Naive thymus-derived CD4-positive, alpha-beta T cell (primary cell): ENCODE measurements at regions of chr2 and their contacts with region 1.

Region 1: GRCh38 chr2:68467077-68467960 is at the starts of genes APLF and FBXO48:
- DNase-seq: peak; percentile 90 to 99 (median 99)
- ATAC-seq: peak; percentile 94
- H3K4me3 ChIP-seq: peak within 1 kb of the TSS; percentile 99
- H3K4me3 Mint-ChIP-seq: peak within 1 kb of the TSS; percentile 88 to 99 (median 94)
- H3K27ac ChIP-seq: peak within 1 kb of the TSS; percentile 89
- H3K27ac Mint-ChIP-seq: peak within 1 kb of the TSS; percentile 80 to 97 (median 89)
- H3K4me1 ChIP-seq: peaks cover 7 to 23% of the 10 kb centered on the region in 2 donors
- H3K4me1 Mint-ChIP-seq: peaks cover 10 to 55% (median 39%) of the 10 kb centered on the region in 7 donors
- H3K27me3 ChIP-seq: no peaks in the 10 kb centered on the region
- H3K27me3 Mint-ChIP-seq: no peaks in the 10 kb centered on the region
- total RNA-seq, gene APLF: 2.9 to 8.9 (median 3.8) TPM
- total RNA-seq, gene FBXO48: 1.1 to 5.6 (median 1.7) TPM

Region 2: GRCh38 chr2:68251187-68251854 is 216.0 kb before region 1 on chr2:
- CTCF ChIA-PET with region 1: no interaction called
- POLR2A ChIA-PET with region 1: no interaction called
- intact Hi-C with region 1: loop called (anchors 1 kb)
- DNase-seq: peak; percentile 46 to 91 (median 82)
- ATAC-seq: peak; percentile 75
- H3K4me3 ChIP-seq: peak overlapping the region; percentile 66
- H3K4me3 Mint-ChIP-seq: peak overlapping the region in 6 of 10 donors; percentile 88 to 99 (median 91)
- H3K27ac ChIP-seq: peak overlapping the region; percentile 82
- H3K27ac Mint-ChIP-seq: peak overlapping the region in 7 of 9 donors; percentile 92 to 99 (median 94)
- H3K4me1 ChIP-seq: peaks cover 44 to 55% of the 10 kb centered on the region in 2 donors
- H3K4me1 Mint-ChIP-seq: peaks cover 35 to 44% (median 42%) of the 10 kb centered on the region in 7 donors
- H3K27me3 ChIP-seq: no peaks in the 10 kb centered on the region
- H3K27me3 Mint-ChIP-seq: peaks cover 0 to 2% (median 0%) of the 10 kb centered on the region in 5 donors

Region 3: DNA sequence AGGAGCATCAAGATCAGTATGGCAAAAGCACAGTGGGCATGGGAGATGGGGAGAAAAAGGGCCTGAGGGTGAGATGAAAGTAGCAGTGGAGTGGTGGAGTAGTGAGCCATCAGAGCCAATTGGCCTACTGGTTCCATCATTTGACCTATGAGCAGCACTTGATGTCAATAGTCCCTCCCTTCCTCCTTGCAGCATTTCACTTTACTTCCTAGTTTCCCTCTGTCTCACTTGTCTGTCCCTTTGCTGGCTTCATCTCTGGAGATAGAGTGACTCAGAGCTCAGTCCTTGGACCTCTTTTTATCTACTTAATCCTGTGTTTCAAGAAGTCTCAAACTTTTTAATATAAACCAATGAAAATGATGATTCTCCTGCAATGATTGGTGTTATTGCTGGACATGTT is 32.3 kb before region 1 on chr2:
- CTCF ChIA-PET with region 1: no interaction called
- POLR2A ChIA-PET with region 1: no interaction called
- intact Hi-C with region 1: no loop called
- DNase-seq: no peak
- ATAC-seq: peak; percentile 57
- H3K4me3 ChIP-seq: no peak overlapping the region
- H3K4me3 Mint-ChIP-seq: no peak overlapping the region
- H3K27ac ChIP-seq: no peak overlapping the region
- H3K27ac Mint-ChIP-seq: no peak overlapping the region
- H3K4me1 ChIP-seq: peaks cover 0 to 6% of the 10 kb centered on the region in 2 donors
- H3K4me1 Mint-ChIP-seq: peaks cover 0 to 7% (median 0%) of the 10 kb centered on the region in 7 donors
- H3K27me3 ChIP-seq: no peaks in the 10 kb centered on the region
- H3K27me3 Mint-ChIP-seq: peaks cover 0 to 18% (median 0%) of the 10 kb centered on the region in 5 donors

Region 4: GRCh38 chr2:68653538-68653982 is 186.2 kb after region 1 on chr2:
- CTCF ChIA-PET with region 1: no interaction called
- POLR2A ChIA-PET with region 1: no interaction called
- intact Hi-C with region 1: loop called in 1 of 2 experiments (anchors 5 kb)
- DNase-seq: peak in 1 of 9 donors; percentile 53
- ATAC-seq: peak; percentile 64
- H3K4me3 ChIP-seq: no peak overlapping the region
- H3K4me3 Mint-ChIP-seq: peak overlapping the region in 2 of 10 donors; percentile 51 to 71
- H3K27ac ChIP-seq: no peak overlapping the region
- H3K27ac Mint-ChIP-seq: peak overlapping the region in 3 of 9 donors; percentile 5 to 58 (median 41)
- H3K4me1 ChIP-seq: peaks cover 6 to 8% of the 10 kb centered on the region in 2 donors
- H3K4me1 Mint-ChIP-seq: peaks cover 16 to 47% (median 20%) of the 10 kb centered on the region in 7 donors
- H3K27me3 ChIP-seq: no peaks in the 10 kb centered on the region
- H3K27me3 Mint-ChIP-seq: peaks cover 4 to 43% (median 17%) of the 10 kb centered on the region in 5 donors

Region 5: GRCh38 chr2:68751397-68752339 is 284.3 kb after region 1 on chr2:
- CTCF ChIA-PET with region 1: interaction called, 34 read pairs
- POLR2A ChIA-PET with region 1: interaction called, 4 read pairs
- intact Hi-C with region 1: loop called in 1 of 2 experiments (anchors 1 kb)
- DNase-seq: peak; percentile 77 to 88 (median 85)
- ATAC-seq: peak; percentile 97
- H3K4me3 ChIP-seq: peak overlapping the region; percentile 24
- H3K4me3 Mint-ChIP-seq: peak overlapping the region; percentile 9 to 94 (median 66)
- H3K27ac ChIP-seq: peak overlapping the region; percentile 65
- H3K27ac Mint-ChIP-seq: peak overlapping the region in 8 of 9 donors; percentile 57 to 96 (median 82)
- H3K4me1 ChIP-seq: peaks cover 82 to 83% of the 10 kb centered on the region in 2 donors
- H3K4me1 Mint-ChIP-seq: peaks cover 61 to 94% (median 87%) of the 10 kb centered on the region in 7 donors
- H3K27me3 ChIP-seq: no peaks in the 10 kb centered on the region
- H3K27me3 Mint-ChIP-seq: no peaks in the 10 kb centered on the region

Region 6: GRCh38 chr2:68909793-68910674 is 442.7 kb after region 1 on chr2:
- CTCF ChIA-PET with region 1: interaction called, 5 read pairs
- POLR2A ChIA-PET with region 1: interaction called, 7 read pairs
- intact Hi-C with region 1: loop called (anchors 1 kb)
- DNase-seq: peak; percentile 29 to 65 (median 59)
- ATAC-seq: peak; percentile 52
- H3K4me3 ChIP-seq: no peak overlapping the region
- H3K4me3 Mint-ChIP-seq: no peak overlapping the region
- H3K27ac ChIP-seq: no peak overlapping the region
- H3K27ac Mint-ChIP-seq: peak overlapping the region in 2 of 9 donors; percentile 33 to 80
- H3K4me1 ChIP-seq: peaks cover 28 to 62% of the 10 kb centered on the region in 2 donors
- H3K4me1 Mint-ChIP-seq: peaks cover 22 to 35% (median 26%) of the 10 kb centered on the region in 7 donors
- H3K27me3 ChIP-seq: no peaks in the 10 kb centered on the region
- H3K27me3 Mint-ChIP-seq: no peaks in the 10 kb centered on the region

Region 7: DNA sequence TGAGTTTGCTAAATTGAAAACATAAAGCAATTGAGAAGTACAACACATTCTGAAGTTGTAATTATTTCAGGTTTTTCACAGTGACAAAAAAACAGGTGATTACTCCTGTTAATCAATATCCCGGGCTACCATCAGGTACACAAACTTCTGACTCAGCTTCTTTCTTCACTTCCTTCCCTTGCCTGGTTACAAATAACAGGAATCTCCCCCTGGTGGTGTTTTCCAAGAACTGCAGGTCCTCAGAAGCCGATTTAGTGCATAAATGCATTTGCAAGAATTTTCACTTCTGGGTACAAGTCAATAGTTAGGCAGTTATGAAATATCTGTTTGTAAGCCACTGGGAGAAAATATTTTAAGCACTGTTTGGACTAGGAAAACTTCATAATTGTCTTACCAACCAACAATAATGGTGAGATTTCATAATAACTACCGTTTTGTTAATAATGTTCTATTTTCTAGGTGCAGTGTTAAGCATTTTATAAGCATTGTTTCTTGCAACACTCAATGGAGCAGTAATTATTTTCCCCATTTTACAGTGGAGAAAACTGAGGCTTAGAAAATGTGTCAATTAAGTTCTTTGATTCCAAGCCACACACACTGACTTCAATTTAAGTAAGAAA is 1349.7 kb after region 1 on chr2:
- CTCF ChIA-PET with region 1: no interaction called
- POLR2A ChIA-PET with region 1: no interaction called
- intact Hi-C with region 1: loop called in 1 of 2 experiments (anchors 10 kb)
- DNase-seq: peak in 8 of 9 donors; percentile 63 to 84 (median 79)
- ATAC-seq: peak; percentile 86
- H3K4me3 ChIP-seq: no peak overlapping the region
- H3K4me3 Mint-ChIP-seq: no peak overlapping the region
- H3K27ac ChIP-seq: no peak overlapping the region
- H3K27ac Mint-ChIP-seq: no peak overlapping the region
- H3K4me1 ChIP-seq: no peaks in the 10 kb centered on the region
- H3K4me1 Mint-ChIP-seq: peaks cover 0 to 15% (median 5%) of the 10 kb centered on the region in 7 donors
- H3K27me3 ChIP-seq: no peaks in the 10 kb centered on the region
- H3K27me3 Mint-ChIP-seq: no peaks in the 10 kb centered on the region